ENCODE measurements at regions of chr18 and their contacts with region 1.

Region 1: GRCh38 chr18:55234366-55235093 is 275.3 kb upstream of the CCDC68 start:
- DNase-seq: peak; percentile 54
- CTCF ChIP-seq: peak; percentile 78

Region 2: GRCh38 chr18:55220523-55220922 is 14.0 kb before region 1 on chr18:
- CTCF ChIA-PET with region 1: interaction called, 16 read pairs
- POLR2A ChIA-PET with region 1: no interaction called
- DNase-seq: peak; percentile 15
- CTCF ChIP-seq: no peak

Region 3: GRCh38 chr18:55265984-55266383 is 31.5 kb after region 1 on chr18:
- CTCF ChIA-PET with region 1: interaction called, 41 read pairs
- POLR2A ChIA-PET with region 1: interaction called, 4 read pairs
- DNase-seq: no peak
- CTCF ChIP-seq: no peak

Region 4: DNA sequence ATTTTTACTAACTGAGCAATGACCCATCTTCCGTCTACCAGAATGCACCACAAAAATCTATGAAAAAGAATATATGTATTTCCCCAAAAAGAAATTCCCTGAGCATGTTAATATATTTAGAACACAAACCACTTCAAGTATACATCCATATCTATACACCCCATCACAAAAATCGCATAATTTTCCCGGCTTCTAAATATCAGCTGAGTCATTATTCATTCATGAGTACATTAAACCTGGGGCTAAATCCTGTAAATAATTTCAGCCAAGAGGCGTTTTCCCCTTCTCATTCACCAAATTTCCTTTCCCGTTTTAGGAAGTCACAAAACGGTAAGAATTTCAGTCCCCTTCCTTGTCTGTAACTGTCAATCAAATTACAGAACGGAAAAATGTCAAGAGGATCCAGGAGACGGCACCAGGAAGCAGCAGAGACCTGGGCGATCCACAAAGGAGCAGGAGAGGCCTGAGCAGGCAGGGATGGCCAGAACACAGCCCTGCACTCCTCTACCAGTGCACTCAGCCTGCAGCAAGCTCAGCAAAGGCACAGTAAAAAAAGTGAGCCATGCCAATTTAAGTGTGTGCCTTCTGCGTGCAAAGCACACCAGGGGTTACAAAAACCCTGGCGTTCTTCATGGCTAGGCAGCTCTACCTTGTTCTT is 52.7 kb after region 1 on chr18:
- CTCF ChIA-PET with region 1: interaction called, 15 read pairs
- POLR2A ChIA-PET with region 1: no interaction called
- DNase-seq: no peak
- CTCF ChIP-seq: no peak

Region 5: GRCh38 chr18:55322178-55322735 is 87.7 kb after region 1 on chr18:
- CTCF ChIA-PET with region 1: interaction called, 39 read pairs
- POLR2A ChIA-PET with region 1: no interaction called
- DNase-seq: peak; percentile 78
- CTCF ChIP-seq: no peak

Region 6: GRCh38 chr18:55384551-55385275 is 150.2 kb after region 1 on chr18:
- CTCF ChIA-PET with region 1: interaction called, 12 read pairs
- POLR2A ChIA-PET with region 1: no interaction called
- DNase-seq: peak; percentile 32
- CTCF ChIP-seq: peak; percentile 43

Region 7: GRCh38 chr18:55534547-55534946 is 300.0 kb after region 1 on chr18:
- CTCF ChIA-PET with region 1: no interaction called
- POLR2A ChIA-PET with region 1: no interaction called
- DNase-seq: no peak
- CTCF ChIP-seq: no peak

Region 8: DNA sequence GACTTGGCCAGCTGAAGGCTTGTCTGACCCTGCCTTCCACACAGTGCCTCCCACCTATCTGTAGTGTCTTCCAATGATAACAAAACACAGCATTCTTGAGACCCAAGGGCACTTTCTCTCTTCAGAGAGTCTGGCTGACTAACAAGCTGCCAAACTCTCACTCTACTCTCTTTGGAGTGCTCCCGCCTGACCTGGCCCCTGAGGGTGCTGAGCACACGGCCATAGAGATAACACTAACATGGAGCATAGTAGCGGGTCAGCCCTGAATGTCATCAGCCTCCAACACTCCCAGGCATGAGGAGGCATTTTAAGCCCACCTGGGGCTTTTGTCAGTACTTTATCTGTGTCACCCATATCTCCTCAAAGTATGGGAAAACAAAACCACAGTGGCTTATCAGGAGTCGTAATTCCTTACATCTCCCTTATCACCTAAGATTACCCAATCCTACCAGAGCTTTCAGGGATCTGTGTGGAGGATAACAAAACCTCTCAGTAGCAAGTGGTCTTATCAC is 513.8 kb after region 1 on chr18:
- CTCF ChIA-PET with region 1: no interaction called
- POLR2A ChIA-PET with region 1: no interaction called
- DNase-seq: no peak
- CTCF ChIP-seq: no peak

Region 9: GRCh38 chr18:56575819-56576663 is 1341.5 kb after region 1 on chr18:
- CTCF ChIA-PET with region 1: interaction called, 10 read pairs
- POLR2A ChIA-PET with region 1: no interaction called
- DNase-seq: peak; percentile 48
- CTCF ChIP-seq: peak; percentile 32